PC-3 (cell line): ENCODE measurements at regions of chr1 and their contacts with region 1.

Region 1: GRCh38 chr1:155978325-155978972 is at the start of gene ARHGEF2:
- DNase-seq: peak; percentile 71
- ATAC-seq: peak; percentile 54
- H3K4me3 ChIP-seq: peak within 1 kb of the TSS; percentile 97
- H3K27ac ChIP-seq: peak within 1 kb of the TSS; percentile 57
- H3K4me1 ChIP-seq: peaks cover 52% of the 10 kb centered on the region
- H3K27me3 ChIP-seq: no peaks in the 10 kb centered on the region
- CTCF ChIP-seq: no peak; the same call in 1 of the 2 replicates
- total RNA-seq, gene ARHGEF2: 65.9 and 70.8 TPM in 2 replicates

Region 2: DNA sequence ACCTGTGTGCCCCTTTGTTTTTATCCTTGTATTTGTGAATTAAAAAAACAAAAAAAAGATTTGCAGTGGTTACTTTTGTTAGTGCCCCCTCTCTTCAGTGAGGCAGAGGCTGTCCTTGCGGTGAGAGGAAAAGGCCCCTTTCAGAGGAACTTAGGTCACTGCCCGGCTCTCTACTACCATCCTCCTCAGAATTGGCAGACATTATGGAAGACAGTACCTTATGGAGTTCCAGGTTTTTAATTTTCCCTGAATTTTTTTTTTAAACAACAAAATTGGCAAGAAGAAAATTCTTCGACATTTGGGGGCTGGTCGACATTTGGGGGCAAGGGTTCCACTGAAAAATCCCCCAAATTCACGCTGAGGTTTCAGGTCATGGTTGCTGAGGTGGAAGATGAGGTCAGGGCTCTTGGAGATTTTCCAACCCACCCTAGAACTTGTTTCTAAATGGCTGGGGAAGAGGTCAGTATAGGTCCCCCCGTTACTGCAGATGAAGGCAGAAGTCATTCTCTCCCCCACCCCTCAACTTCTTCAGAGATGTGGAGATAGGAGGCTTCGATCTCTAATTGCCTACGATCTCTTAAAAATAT is 31.7 kb before region 1 on chr1:
- CTCF ChIA-PET with region 1: interaction called, 11 read pairs
- POLR2A ChIA-PET with region 1: no interaction called
- intact Hi-C with region 1: no loop called
- DNase-seq: no peak
- ATAC-seq: no peak
- H3K4me3 ChIP-seq: no peak overlapping the region
- H3K27ac ChIP-seq: no peak overlapping the region
- H3K4me1 ChIP-seq: peaks cover 14% of the 10 kb centered on the region
- H3K27me3 ChIP-seq: no peaks in the 10 kb centered on the region
- CTCF ChIP-seq: no peak

Region 3: GRCh38 chr1:155961937-155962336 is 16.5 kb before region 1 on chr1:
- CTCF ChIA-PET with region 1: interaction called, 8 read pairs
- POLR2A ChIA-PET with region 1: interaction called, 8 read pairs
- intact Hi-C with region 1: loop called (anchors 1 kb)
- DNase-seq: peak; percentile 100
- ATAC-seq: peak; percentile 98
- H3K4me3 ChIP-seq: 0 out of 2 replicates have a peak overlapping the region, but pooled peaks have one; percentile 5
- H3K27ac ChIP-seq: peak overlapping the region; percentile 93
- H3K4me1 ChIP-seq: peaks cover 32% of the 10 kb centered on the region
- H3K27me3 ChIP-seq: no peaks in the 10 kb centered on the region
- CTCF ChIP-seq: peak; percentile 52

Region 4: GRCh38 chr1:155989242-155990004 is 11.0 kb after region 1 on chr1:
- CTCF ChIA-PET with region 1: interaction called, 10 read pairs
- POLR2A ChIA-PET with region 1: no interaction called
- intact Hi-C with region 1: no loop called
- DNase-seq: peak; percentile 88
- ATAC-seq: peak; percentile 91
- H3K4me3 ChIP-seq: no peak overlapping the region
- H3K27ac ChIP-seq: no peak overlapping the region
- H3K4me1 ChIP-seq: no peaks in the 10 kb centered on the region; the same call in 1 of the 2 replicates
- H3K27me3 ChIP-seq: no peaks in the 10 kb centered on the region
- CTCF ChIP-seq: peak; percentile 98

Region 5: DNA sequence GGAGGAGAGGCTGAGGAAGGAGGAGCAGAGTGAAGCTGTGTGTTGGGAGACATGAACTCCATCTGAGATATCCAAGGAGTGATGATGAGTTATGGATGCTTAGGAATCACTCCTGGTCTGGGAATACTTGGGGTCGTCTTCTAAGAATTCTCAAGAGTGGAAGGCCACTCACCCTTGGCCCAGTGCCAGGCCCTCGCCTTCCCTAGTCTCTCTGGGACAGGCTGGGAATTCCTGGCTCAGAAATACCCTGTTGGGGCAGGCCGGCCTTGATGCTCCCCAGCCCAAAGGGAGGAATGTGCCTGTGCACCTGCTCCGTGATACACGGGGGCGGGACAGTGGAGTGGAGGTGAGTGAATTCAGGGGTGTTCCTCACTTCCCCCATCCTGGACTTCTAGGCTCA is 123.4 kb after region 1 on chr1:
- CTCF ChIA-PET with region 1: no interaction called
- POLR2A ChIA-PET with region 1: interaction called, 29 read pairs
- intact Hi-C with region 1: no loop called
- DNase-seq: no peak
- ATAC-seq: no peak
- H3K4me3 ChIP-seq: no peak overlapping the region
- H3K27ac ChIP-seq: no peak overlapping the region
- H3K4me1 ChIP-seq: peaks cover 67% of the 10 kb centered on the region
- H3K27me3 ChIP-seq: no peaks in the 10 kb centered on the region
- CTCF ChIP-seq: no peak

Region 6: DNA sequence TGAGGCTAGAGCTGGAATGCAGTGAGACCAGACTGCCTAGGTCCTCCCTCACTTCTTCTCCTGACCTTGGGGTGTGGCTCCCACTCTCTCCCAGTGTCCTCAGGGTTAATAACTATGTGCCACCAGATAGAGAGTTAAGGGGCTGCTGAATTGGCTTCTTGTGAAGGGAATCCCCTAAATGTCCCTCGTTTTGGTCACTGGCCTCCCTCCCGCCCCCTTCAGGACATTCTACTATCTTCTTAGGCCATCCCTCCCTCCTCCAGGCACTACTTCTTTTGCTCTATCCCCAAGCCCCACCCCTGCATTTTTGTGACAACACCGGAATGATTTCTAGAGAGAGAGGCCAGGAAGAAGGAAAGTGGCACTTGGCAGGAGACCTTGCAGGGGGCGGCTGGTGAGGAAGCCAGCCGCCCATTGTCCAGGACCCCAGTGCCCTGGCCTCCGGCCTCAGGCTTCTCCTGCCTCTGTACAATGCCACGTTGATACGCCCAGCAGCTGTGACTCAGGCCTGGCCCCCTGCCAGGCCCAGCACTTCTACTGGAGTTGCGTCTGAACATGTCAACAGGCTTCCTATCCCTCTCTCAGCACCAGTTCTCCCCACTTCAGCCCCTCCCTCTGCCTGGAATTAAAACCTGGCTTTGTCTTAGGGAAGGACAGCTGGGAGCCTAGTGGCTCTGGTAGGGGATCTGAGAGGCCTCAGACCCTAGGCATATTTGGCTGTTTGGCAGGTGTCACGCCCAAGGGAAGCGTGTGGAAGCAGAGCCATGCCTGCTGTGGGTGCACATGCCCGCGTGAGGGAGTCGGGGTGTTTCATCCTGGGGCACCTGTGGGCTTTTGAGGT is 145.1 kb after region 1 on chr1:
- CTCF ChIA-PET with region 1: no interaction called
- POLR2A ChIA-PET with region 1: no interaction called
- intact Hi-C with region 1: loop called (anchors 5 kb)
- DNase-seq: peak; percentile 99
- ATAC-seq: peak; percentile 33
- H3K4me3 ChIP-seq: peak overlapping the region; percentile 54
- H3K27ac ChIP-seq: peak overlapping the region; percentile 98
- H3K4me1 ChIP-seq: peaks cover 92% of the 10 kb centered on the region
- H3K27me3 ChIP-seq: no peaks in the 10 kb centered on the region
- CTCF ChIP-seq: peak; percentile 61